ENCODE measurements at regions of chr3 and their contacts with region 1.

Region 1: DNA sequence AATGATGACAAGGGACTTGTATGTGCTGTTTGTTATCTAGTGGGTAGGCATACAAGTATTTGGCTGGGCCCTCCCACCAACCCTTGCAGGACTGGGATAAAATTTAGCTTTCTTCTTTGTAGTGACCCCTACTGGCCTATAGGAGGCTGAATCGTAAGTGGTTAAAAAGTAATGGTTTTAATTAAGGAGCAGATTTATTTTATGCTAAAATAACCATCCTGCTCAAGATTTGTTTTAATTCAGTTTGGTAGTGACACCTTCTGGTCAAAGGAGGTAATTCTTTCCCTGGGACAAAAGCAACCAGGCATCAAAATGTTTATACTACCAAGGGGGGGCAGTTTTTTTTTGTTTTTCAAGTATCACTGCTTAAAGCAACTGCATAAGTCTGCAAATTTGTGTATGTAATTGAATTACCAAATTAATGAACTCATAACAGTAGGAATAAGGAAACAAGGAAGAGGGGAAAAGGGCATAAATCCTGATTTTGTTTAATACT is 70.7 kb downstream of the TOP2B start:
- DNase-seq: peak; percentile 29
- ATAC-seq: peak; percentile 80
- H3K4me3 ChIP-seq: no peak overlapping the region
- H3K27ac ChIP-seq: no peak overlapping the region
- H3K4me1 ChIP-seq: peaks cover 8 to 12% of the 10 kb centered on the region in 2 experiments; a peak in 2 of 4 replicates
- H3K27me3 ChIP-seq: no peaks in the 10 kb centered on the region
- CTCF ChIP-seq: peak; percentile 53 to 80 (median 64); a peak in 5 of 6 replicates
- POLR2A ChIP-seq: no peak
- RAD21 ChIP-seq: peak; percentile 58

Region 2: DNA sequence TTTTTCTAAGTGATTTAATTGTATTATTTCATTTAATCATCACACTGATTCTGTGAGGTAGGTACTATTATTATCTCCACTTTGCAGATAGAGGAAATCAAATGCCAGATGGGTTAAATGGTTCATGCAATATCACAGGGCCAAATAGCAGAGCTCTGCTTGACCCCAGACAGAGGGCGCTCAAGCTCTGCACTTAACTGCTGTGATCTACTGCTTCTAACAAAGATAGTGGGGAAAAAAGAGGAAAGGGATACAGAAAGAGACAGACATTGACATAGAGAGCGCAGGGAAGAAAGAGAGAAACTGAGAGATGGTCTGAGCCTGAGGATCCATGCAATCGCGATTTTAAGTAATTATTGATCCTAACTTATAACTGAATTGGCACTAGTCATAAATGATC is 820.3 kb before region 1 on chr3:
- CTCF ChIA-PET with region 1: no interaction called
- POLR2A ChIA-PET with region 1: no interaction called
- RAD21 ChIA-PET with region 1: no interaction called
- intact Hi-C with region 1: loop called (anchors 2 kb)
- DNase-seq: peak; percentile 46
- ATAC-seq: peak; percentile 94
- H3K4me3 ChIP-seq: no peak overlapping the region
- H3K27ac ChIP-seq: no peak overlapping the region
- H3K4me1 ChIP-seq: no peaks in the 10 kb centered on the region
- H3K27me3 ChIP-seq: no peaks in the 10 kb centered on the region; the same call in 1 of the 2 replicates
- CTCF ChIP-seq: peak; percentile 54 to 89 (median 82); a peak in 5 of 6 replicates
- POLR2A ChIP-seq: no peak
- RAD21 ChIP-seq: peak; percentile 77

Region 3: GRCh38 chr3:24963762-24964625 is 630.1 kb before region 1 on chr3:
- CTCF ChIA-PET with region 1: no interaction called
- POLR2A ChIA-PET with region 1: no interaction called
- RAD21 ChIA-PET with region 1: no interaction called
- intact Hi-C with region 1: loop called (anchors 5 kb)
- DNase-seq: peak; percentile 2
- ATAC-seq: no peak
- H3K4me3 ChIP-seq: no peak overlapping the region
- H3K27ac ChIP-seq: no peak overlapping the region
- H3K4me1 ChIP-seq: no peaks in the 10 kb centered on the region
- H3K27me3 ChIP-seq: no peaks in the 10 kb centered on the region
- CTCF ChIP-seq: peak; percentile 20 to 51 (median 48); a peak in 5 of 6 replicates
- POLR2A ChIP-seq: no peak
- RAD21 ChIP-seq: peak; percentile 35; the same call in 1 of the 2 replicates

Region 4: DNA sequence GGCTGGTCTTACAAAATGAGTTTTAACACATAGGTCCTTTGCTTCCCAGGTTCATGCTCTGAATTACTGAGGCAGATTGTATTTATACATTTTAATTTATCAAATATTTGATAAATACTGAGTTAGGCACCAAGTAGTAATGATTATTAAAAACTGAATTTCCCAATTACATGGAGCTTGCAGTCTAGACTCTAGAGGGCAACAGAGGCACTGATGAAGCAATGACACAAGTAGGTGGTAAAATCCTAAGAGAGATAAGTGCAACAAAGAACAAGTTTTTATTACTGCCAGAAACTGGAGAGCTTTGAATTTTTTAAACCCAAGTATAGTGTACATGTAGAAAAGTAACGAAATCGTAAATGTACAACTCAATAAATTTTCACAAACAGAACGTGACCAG is 572.2 kb before region 1 on chr3:
- CTCF ChIA-PET with region 1: interaction called, 3 read pairs
- POLR2A ChIA-PET with region 1: no interaction called
- RAD21 ChIA-PET with region 1: no interaction called
- intact Hi-C with region 1: loop called (anchors 5 kb)
- DNase-seq: no peak
- ATAC-seq: no peak
- H3K4me3 ChIP-seq: no peak overlapping the region
- H3K27ac ChIP-seq: no peak overlapping the region
- H3K4me1 ChIP-seq: no peaks in the 10 kb centered on the region
- H3K27me3 ChIP-seq: peaks cover 3% of the 10 kb centered on the region; the same call in 1 of the 2 replicates
- CTCF ChIP-seq: peak in 2 of 3 experiments; percentile 31 to 38; a peak in 3 of 6 replicates
- POLR2A ChIP-seq: no peak
- RAD21 ChIP-seq: peak; percentile 28

Region 5: GRCh38 chr3:25441234-25441856 is 152.7 kb before region 1 on chr3:
- CTCF ChIA-PET with region 1: interaction called, 4 read pairs
- POLR2A ChIA-PET with region 1: no interaction called
- RAD21 ChIA-PET with region 1: no interaction called
- intact Hi-C with region 1: loop called (anchors 5 kb)
- DNase-seq: peak; percentile 15
- ATAC-seq: peak; percentile 74
- H3K4me3 ChIP-seq: no peak overlapping the region
- H3K27ac ChIP-seq: no peak overlapping the region
- H3K4me1 ChIP-seq: no peaks in the 10 kb centered on the region
- H3K27me3 ChIP-seq: peaks cover 23% of the 10 kb centered on the region; the same call in 1 of the 2 replicates
- CTCF ChIP-seq: peak; percentile 43 to 98 (median 86); a peak in 5 of 6 replicates
- POLR2A ChIP-seq: no peak
- RAD21 ChIP-seq: peak; percentile 40

Region 6: DNA sequence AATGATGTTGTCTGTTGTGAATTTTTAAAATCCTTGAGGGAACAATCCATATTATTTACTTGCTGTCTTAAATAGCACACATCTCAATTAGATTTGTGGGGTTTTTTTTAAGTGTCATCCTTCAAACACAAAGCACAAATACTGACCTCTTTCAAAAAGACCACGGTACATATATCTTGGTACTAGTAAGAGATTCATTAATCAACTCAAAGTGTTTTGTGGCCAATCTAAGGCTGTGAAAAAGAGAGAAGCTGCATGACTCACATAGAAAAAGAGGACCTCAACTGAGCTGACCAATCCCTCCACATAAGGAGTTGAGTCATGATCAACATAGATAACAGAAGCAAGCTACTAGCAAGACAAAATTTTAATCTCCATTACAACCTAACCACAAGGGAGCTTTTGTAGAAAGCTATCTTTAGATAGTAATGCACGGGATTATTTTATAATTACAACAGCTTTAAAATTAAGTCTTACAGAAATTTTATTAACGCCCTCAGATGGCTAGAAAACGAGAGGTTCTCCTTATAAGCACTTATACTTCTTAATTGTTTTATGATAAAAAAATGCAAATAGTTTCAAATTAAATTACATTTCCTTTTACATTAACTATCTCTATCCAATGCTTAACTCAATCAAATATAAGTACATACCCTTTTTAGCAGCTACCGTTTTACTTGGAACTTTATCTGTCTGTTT is 10.2 kb after region 1 on chr3:
- CTCF ChIA-PET with region 1: interaction called, 14 read pairs
- POLR2A ChIA-PET with region 1: no interaction called
- RAD21 ChIA-PET with region 1: no interaction called
- intact Hi-C with region 1: no loop called
- DNase-seq: no peak
- ATAC-seq: peak; percentile 76
- H3K4me3 ChIP-seq: no peak overlapping the region
- H3K27ac ChIP-seq: no peak overlapping the region
- H3K4me1 ChIP-seq: peaks cover 0 to 11% of the 10 kb centered on the region in 2 experiments; a peak in 1 of 4 replicates
- H3K27me3 ChIP-seq: no peaks in the 10 kb centered on the region
- CTCF ChIP-seq: no peak
- POLR2A ChIP-seq: no peak
- RAD21 ChIP-seq: no peak